ENCODE measurements at regions of chr20 and their contacts with region 1.

Region 1: GRCh38 chr20:41428285-41428684 is 61.7 kb upstream of the EMILIN3 start:
- DNase-seq: peak; percentile 76
- H3K4me3 Mint-ChIP-seq: no peak overlapping the region
- H3K27ac Mint-ChIP-seq: peak overlapping the region; percentile 93
- H3K4me1 Mint-ChIP-seq: peaks cover 43% of the 10 kb centered on the region
- H3K27me3 Mint-ChIP-seq: no peaks in the 10 kb centered on the region

Region 2: GRCh38 chr20:41453010-41453950 is 25.0 kb after region 1 on chr20:
- CTCF ChIA-PET with region 1: no interaction called
- intact Hi-C with region 1: no loop called
- DNase-seq: no peak
- H3K4me3 Mint-ChIP-seq: no peak overlapping the region
- H3K27ac Mint-ChIP-seq: no peak overlapping the region
- H3K4me1 Mint-ChIP-seq: no peaks in the 10 kb centered on the region
- H3K27me3 Mint-ChIP-seq: no peaks in the 10 kb centered on the region

Region 3: GRCh38 chr20:41617931-41618806 is 189.9 kb after region 1 on chr20 and contains the start of gene CHD6:
- CTCF ChIA-PET with region 1: no interaction called
- intact Hi-C with region 1: loop called (anchors 1 kb)
- DNase-seq: peak; percentile 100
- H3K4me3 Mint-ChIP-seq: peak within 1 kb of the TSS; percentile 85
- H3K27ac Mint-ChIP-seq: peak within 1 kb of the TSS; percentile 68
- H3K4me1 Mint-ChIP-seq: peaks cover 39% of the 10 kb centered on the region
- H3K27me3 Mint-ChIP-seq: no peaks in the 10 kb centered on the region
- total RNA-seq, gene CHD6: 30.1 to 31.8 TPM